ENCODE measurements at regions of chr5 and their contacts with region 1.

Region 1: DNA sequence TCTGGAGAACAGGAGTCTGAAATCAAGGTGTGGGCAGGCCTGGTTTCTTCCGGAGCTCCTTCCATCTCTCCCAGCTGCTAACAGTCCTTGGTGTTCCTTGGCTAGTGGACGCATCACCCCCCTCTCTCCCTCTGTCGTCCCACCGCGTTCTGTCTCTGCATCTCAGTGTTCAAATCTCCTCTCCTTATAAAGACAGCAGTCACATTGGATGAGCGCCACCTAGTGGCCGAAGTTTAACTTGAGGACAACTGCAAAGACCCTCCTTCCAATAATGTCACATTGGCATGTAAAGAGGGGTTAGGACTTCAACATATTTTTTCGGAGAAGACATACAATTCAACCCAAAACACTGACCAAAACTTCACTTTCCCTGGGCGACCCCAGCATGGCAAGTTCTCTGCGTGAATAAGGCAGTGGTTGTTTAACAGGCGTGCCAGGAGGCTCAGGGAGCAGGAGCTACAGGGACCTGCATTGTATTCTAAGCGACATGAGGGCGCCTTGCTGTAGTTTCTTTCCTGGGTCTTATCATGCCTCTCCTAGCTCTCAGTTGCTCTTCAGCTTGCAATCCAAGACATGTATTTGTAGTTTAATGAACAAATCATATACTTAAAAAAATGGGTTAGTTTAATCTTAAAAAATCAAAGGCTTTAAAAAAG is 27.9 kb upstream of the BASP1 start:
- H3K4me3 ChIP-seq: no peak overlapping the region
- H3K27ac ChIP-seq: no peak overlapping the region
- H3K4me1 ChIP-seq: 0 out of 2 replicates have a peak, but pooled peaks cover 5% of the 10 kb centered on the region
- CTCF ChIP-seq: peak; percentile 76

Region 2: GRCh38 chr5:16661713-16662112 is 527.8 kb before region 1 on chr5:
- CTCF ChIA-PET with region 1: interaction called, 20 read pairs
- POLR2A ChIA-PET with region 1: no interaction called
- H3K4me3 ChIP-seq: no peak overlapping the region
- H3K27ac ChIP-seq: no peak overlapping the region
- H3K4me1 ChIP-seq: no peaks in the 10 kb centered on the region
- CTCF ChIP-seq: no peak

Region 3: GRCh38 chr5:16784843-16785791 is 404.4 kb before region 1 on chr5:
- CTCF ChIA-PET with region 1: interaction called, 32 read pairs
- POLR2A ChIA-PET with region 1: no interaction called
- H3K4me3 ChIP-seq: no peak overlapping the region
- H3K27ac ChIP-seq: no peak overlapping the region
- H3K4me1 ChIP-seq: 0 out of 2 replicates have a peak, but pooled peaks cover 3% of the 10 kb centered on the region
- CTCF ChIP-seq: no peak

Region 4: DNA sequence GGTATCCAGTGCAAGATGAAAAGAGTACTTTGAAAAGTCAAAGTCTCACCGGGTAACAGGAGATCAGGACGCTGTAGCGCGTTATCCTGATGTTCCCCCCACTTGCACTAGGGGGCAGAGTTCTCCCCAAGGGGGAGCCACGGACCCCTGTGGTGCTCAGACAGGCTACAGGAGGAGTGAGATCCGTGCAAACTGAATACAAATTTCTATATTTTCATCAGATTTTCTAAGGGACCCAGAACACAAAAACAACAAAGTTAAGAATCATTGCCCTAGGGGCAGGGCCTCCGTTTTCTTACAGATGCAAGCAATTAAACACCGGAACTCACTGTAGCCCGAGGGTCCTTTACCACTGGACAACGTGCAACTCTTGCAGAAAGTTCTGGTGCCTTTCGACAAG is 255.4 kb before region 1 on chr5:
- CTCF ChIA-PET with region 1: interaction called, 69 read pairs
- POLR2A ChIA-PET with region 1: interaction called, 4 read pairs
- H3K4me3 ChIP-seq: peak overlapping the region; percentile 95
- H3K27ac ChIP-seq: no peak overlapping the region
- H3K4me1 ChIP-seq: peaks cover 35% of the 10 kb centered on the region
- CTCF ChIP-seq: peak; percentile 80

Region 5: GRCh38 chr5:17081142-17081541 is 108.4 kb before region 1 on chr5:
- CTCF ChIA-PET with region 1: interaction called, 10 read pairs
- POLR2A ChIA-PET with region 1: no interaction called
- H3K4me3 ChIP-seq: no peak overlapping the region
- H3K27ac ChIP-seq: no peak overlapping the region
- H3K4me1 ChIP-seq: no peaks in the 10 kb centered on the region
- CTCF ChIP-seq: no peak

Region 6: GRCh38 chr5:17157916-17158529 is 31.5 kb before region 1 on chr5:
- CTCF ChIA-PET with region 1: interaction called, 51 read pairs
- POLR2A ChIA-PET with region 1: no interaction called
- H3K4me3 ChIP-seq: no peak overlapping the region
- H3K27ac ChIP-seq: no peak overlapping the region
- H3K4me1 ChIP-seq: no peaks in the 10 kb centered on the region
- CTCF ChIP-seq: no peak

Measured in HEK293 (cell line).